Naive thymus-derived CD4-positive, alpha-beta T cell (primary cell): ENCODE measurements at regions of chr4 and their contacts with region 1.

Region 1: GRCh38 chr4:185203486-185204237 is at the start of gene CFAP97:
- DNase-seq: peak; percentile 78 to 90 (median 85)
- ATAC-seq: peak; percentile 89
- H3K4me3 ChIP-seq: peak within 1 kb of the TSS; percentile 64
- H3K4me3 Mint-ChIP-seq: peak within 1 kb of the TSS; percentile 87 to 99 (median 96)
- H3K27ac ChIP-seq: peak within 1 kb of the TSS; percentile 75
- H3K27ac Mint-ChIP-seq: peak within 1 kb of the TSS; percentile 95 to 99 (median 98)
- H3K4me1 ChIP-seq: peaks cover 22% of the 10 kb centered on the region in 2 donors
- H3K4me1 Mint-ChIP-seq: peaks cover 28 to 60% (median 53%) of the 10 kb centered on the region in 7 donors
- H3K27me3 ChIP-seq: no peaks in the 10 kb centered on the region
- H3K27me3 Mint-ChIP-seq: peaks cover 0 to 3% (median 0%) of the 10 kb centered on the region in 5 donors
- total RNA-seq, gene CFAP97: 23.6 to 46.5 (median 38.0) TPM

Region 2: DNA sequence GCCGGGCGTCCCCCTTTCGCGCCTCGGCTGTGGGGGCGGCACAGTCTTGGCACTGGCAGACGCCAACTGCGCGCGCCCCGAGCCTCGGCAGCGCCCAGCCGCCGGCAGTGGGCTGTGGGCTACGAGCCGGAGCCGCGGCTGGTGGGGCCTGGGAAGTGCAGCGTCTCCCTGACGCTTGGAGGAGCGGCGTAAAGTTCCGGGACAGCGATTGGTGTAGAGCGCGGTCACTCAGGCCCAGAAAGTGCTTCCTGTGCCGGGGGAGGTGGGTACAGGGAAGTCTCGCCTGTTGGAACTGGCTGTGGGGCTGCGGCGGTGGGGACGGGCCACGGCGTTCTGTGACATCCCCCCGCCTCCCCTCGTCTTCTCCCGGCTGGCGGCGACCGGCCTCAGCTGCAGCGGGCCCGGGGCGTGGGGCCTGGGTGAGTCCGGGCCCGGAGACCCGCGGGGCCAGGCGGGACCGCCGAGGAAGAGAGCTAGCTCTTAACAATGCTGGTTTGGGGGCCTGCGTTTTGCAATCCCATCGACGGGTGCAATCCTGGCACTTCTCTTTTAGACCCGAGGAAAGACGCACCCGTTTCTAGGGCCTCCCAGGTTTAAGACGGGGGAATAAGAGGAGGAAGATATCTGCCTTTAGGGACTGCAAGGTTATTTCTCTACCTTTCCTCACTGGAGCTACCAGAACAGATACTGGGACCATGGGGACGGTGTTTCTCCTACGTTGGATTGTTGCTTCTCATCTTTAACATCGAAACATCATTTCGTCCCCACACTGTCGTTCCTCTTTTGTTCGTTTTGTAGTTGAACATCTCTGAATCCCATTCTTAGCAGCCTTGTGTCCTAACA is 1544.4 kb before region 1 on chr4 and contains the starts of genes RWDD4 and TRAPPC11:
- CTCF ChIA-PET with region 1: no interaction called
- POLR2A ChIA-PET with region 1: no interaction called
- intact Hi-C with region 1: loop called in 1 of 2 experiments (anchors 10 kb)
- DNase-seq: peak; percentile 83 to 97 (median 95)
- ATAC-seq: peak; percentile 99
- H3K4me3 ChIP-seq: peak within 1 kb of the TSS; percentile 87
- H3K4me3 Mint-ChIP-seq: peak within 1 kb of the TSS; percentile 91 to 98 (median 96)
- H3K27ac ChIP-seq: peak within 1 kb of the TSS; percentile 96
- H3K27ac Mint-ChIP-seq: peak within 1 kb of the TSS; percentile 90 to 99 (median 95)
- H3K4me1 ChIP-seq: peaks cover 14 to 19% of the 10 kb centered on the region in 2 donors
- H3K4me1 Mint-ChIP-seq: peaks cover 35 to 48% (median 38%) of the 10 kb centered on the region in 7 donors
- H3K27me3 ChIP-seq: no peaks in the 10 kb centered on the region
- H3K27me3 Mint-ChIP-seq: no peaks in the 10 kb centered on the region
- total RNA-seq, gene RWDD4: 9.3 to 15.8 (median 11.6) TPM
- total RNA-seq, gene TRAPPC11: 26.3 to 48.8 (median 35.6) TPM

Region 3: GRCh38 chr4:185142912-185143595 is 60.6 kb before region 1 on chr4 and contains the start of gene SLC25A4:
- CTCF ChIA-PET with region 1: no interaction called
- POLR2A ChIA-PET with region 1: interaction called, 4 read pairs
- intact Hi-C with region 1: loop called (anchors 1 to 5 kb)
- DNase-seq: peak; percentile 68 to 81 (median 75)
- ATAC-seq: peak; percentile 95
- H3K4me3 ChIP-seq: peak within 1 kb of the TSS; percentile 57
- H3K4me3 Mint-ChIP-seq: peak within 1 kb of the TSS; percentile 84 to 95 (median 90)
- H3K27ac ChIP-seq: peak within 1 kb of the TSS; percentile 52
- H3K27ac Mint-ChIP-seq: peak within 1 kb of the TSS in 7 of 9 donors; percentile 4 to 89 (median 83)
- H3K4me1 ChIP-seq: peaks cover 4 to 13% of the 10 kb centered on the region in 2 donors
- H3K4me1 Mint-ChIP-seq: peaks cover 11 to 15% (median 12%) of the 10 kb centered on the region in 7 donors
- H3K27me3 ChIP-seq: peaks cover 0 to 3% of the 10 kb centered on the region in 2 donors
- H3K27me3 Mint-ChIP-seq: peaks cover 15 to 69% (median 26%) of the 10 kb centered on the region in 5 donors
- total RNA-seq, gene SLC25A4: 0.60 to 7.2 (median 4.9) TPM

Region 4: DNA sequence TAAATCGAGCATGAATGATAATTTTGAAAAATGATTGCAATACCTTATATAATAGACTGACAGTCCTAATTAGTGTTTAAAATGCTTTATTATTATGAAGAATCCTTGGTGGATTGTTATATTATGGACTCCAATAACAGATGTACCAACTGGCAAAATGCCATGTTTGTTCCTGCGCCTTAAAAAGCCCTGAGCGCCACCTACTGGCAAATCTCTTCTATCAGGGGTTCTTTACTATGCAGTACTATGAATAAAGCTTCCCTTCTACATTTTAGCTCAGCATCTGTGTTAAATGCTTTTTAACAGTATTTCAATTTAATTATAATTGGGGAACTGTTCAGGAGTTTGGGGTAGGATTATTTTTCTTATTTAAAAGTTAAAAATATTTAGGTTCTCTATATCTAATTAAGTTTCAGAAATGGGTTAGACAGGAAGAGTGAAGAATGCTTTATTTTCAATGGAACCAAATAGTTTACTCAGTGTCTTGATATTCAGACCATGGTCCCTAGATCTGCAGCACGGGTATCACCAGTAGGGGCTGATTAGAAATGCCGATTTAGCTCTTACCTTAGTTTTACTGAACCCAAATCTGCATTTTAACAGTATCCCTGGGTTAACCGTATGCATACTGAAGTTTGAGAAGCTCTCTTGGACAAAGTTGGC is 19.9 kb before region 1 on chr4:
- CTCF ChIA-PET with region 1: interaction called, 16 read pairs
- POLR2A ChIA-PET with region 1: interaction called, 6 read pairs
- intact Hi-C with region 1: loop called in 1 of 2 experiments (anchors 1 kb)
- DNase-seq: peak; percentile 42 to 78 (median 73)
- ATAC-seq: peak; percentile 84
- H3K4me3 ChIP-seq: no peak overlapping the region
- H3K4me3 Mint-ChIP-seq: no peak overlapping the region
- H3K27ac ChIP-seq: no peak overlapping the region
- H3K27ac Mint-ChIP-seq: no peak overlapping the region
- H3K4me1 ChIP-seq: no peaks in the 10 kb centered on the region
- H3K4me1 Mint-ChIP-seq: peaks cover 16 to 63% (median 39%) of the 10 kb centered on the region in 7 donors
- H3K27me3 ChIP-seq: no peaks in the 10 kb centered on the region
- H3K27me3 Mint-ChIP-seq: no peaks in the 10 kb centered on the region

Region 5: DNA sequence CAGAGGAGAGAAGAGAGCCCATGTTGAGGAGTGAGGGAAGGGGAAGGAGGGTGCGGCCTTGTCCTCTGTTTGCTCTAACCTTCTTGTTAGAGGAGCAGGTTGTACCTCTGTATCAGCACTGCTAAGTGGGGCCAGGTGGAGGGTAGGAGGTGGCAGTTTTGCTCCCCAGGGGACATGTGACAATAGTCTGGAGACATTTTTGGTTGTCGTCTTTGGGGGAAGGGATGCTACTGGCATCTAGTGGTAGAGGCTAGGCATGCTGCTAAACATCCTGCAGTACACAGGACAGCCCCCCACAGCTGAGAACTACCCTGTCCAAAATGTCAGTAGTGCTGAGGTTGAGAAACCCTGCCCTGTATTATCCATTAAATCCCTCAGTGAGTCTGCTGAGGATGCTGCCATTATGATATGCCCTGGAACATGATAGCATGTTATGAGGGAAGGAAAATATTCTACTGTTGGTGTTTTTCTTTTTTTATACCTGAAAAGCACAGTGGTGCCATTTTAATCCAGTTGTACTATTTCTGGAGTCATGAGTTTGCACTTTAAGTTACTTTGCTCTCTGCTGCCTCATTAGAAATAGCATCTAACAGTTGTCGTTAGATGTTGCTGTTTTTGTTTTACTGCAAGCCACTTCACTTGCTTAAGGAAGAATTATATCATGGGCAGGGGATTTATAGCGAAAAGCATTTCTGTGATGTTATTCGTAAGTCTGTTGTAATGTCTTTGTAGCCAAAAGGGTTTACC is 101.5 kb after region 1 on chr4:
- CTCF ChIA-PET with region 1: no interaction called
- POLR2A ChIA-PET with region 1: no interaction called
- intact Hi-C with region 1: loop called in 1 of 2 experiments (anchors 5 kb)
- DNase-seq: peak in 7 of 9 donors; percentile 0 to 44 (median 36)
- ATAC-seq: peak; percentile 59
- H3K4me3 ChIP-seq: no peak overlapping the region
- H3K4me3 Mint-ChIP-seq: no peak overlapping the region
- H3K27ac ChIP-seq: no peak overlapping the region
- H3K27ac Mint-ChIP-seq: peak overlapping the region in 2 of 9 donors; percentile 25 to 75
- H3K4me1 ChIP-seq: no peaks in the 10 kb centered on the region
- H3K4me1 Mint-ChIP-seq: peaks cover 0 to 15% (median 0%) of the 10 kb centered on the region in 7 donors
- H3K27me3 ChIP-seq: no peaks in the 10 kb centered on the region
- H3K27me3 Mint-ChIP-seq: no peaks in the 10 kb centered on the region

Region 6: DNA sequence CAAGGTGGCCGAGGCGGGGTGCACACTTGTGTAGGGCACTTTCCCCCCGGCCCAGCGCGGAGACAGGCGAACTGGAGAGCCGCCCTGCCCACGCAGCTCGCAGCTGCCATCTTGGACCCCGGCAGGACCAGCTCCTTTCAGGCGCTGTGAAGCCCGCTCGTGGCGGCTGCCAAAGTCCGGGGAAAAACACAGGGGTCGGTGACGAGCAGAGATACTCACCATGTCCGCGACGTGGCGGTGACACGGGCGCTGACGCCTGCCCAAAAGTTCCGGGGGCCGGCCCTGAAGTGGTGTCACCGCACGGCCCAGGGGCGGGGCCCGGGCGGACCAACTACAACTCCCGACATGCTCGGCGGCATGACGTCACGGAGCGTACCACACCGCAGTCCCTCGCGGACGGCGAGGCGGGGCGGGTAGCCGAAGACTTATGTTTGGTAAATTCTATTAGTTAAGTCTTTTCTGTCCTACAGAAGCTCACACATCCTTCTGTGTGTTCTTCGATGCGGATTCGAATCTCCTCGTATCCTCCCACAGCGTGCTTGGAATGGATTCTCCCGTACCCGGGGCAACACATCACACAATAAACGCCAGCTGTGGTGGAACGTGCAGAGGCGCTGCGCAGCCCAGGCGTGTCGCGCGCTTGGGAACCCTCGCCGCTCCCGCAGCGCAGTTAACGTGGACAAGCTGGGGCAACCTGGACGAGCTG is 222.1 kb after region 1 on chr4 and contains the start of gene UFSP2:
- CTCF ChIA-PET with region 1: no interaction called
- POLR2A ChIA-PET with region 1: no interaction called
- intact Hi-C with region 1: loop called (anchors 1 kb)
- DNase-seq: peak; percentile 88 to 96 (median 92)
- ATAC-seq: peak; percentile 93
- H3K4me3 ChIP-seq: peak within 1 kb of the TSS; percentile 98
- H3K4me3 Mint-ChIP-seq: peak within 1 kb of the TSS; percentile 78 to 97 (median 90)
- H3K27ac ChIP-seq: peak within 1 kb of the TSS; percentile 95
- H3K27ac Mint-ChIP-seq: peak within 1 kb of the TSS; percentile 89 to 100 (median 99)
- H3K4me1 ChIP-seq: peaks cover 16 to 18% of the 10 kb centered on the region in 2 donors
- H3K4me1 Mint-ChIP-seq: peaks cover 25 to 43% (median 38%) of the 10 kb centered on the region in 7 donors
- H3K27me3 ChIP-seq: no peaks in the 10 kb centered on the region
- H3K27me3 Mint-ChIP-seq: peaks cover 0 to 12% (median 7%) of the 10 kb centered on the region in 5 donors
- total RNA-seq, gene UFSP2: 13.9 to 34.5 (median 21.0) TPM

Region 7: DNA sequence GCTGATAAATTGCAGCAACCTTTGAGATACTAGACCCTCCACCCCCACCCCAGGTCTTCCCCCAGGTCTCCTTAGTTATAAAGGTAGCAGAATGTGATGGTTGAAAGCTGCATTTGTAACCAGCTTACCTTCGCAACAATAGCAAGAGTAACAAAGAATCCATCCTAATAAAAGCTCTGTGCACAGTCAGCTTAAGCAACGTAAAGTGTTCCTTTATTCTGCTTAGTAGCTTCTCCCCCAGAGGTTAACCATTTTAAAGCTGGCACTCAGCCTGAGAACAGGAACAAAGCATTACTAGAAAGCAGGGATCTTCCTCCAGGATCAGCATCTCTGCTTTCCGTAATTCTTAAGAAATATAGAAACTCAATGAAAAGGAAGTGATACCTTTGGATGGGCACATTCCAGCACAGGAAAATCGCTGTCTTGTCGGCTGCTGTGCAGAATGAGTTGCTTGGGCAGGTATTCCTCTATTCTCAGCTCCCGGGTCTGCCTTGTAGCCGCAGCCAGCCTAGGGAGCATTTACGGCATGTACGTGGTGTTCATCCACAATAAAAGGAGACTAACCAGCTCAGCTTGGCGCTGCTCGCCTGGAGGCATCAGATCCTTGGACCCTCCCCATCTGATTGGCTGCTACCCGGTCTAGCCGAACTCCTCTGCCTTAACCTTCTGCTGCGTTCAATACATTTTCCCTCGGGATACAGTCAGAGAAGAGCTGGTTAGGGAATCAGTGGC is 752.3 kb after region 1 on chr4:
- CTCF ChIA-PET with region 1: no interaction called
- POLR2A ChIA-PET with region 1: no interaction called
- intact Hi-C with region 1: no loop called
- DNase-seq: no peak
- ATAC-seq: no peak
- H3K4me3 ChIP-seq: no peak overlapping the region
- H3K4me3 Mint-ChIP-seq: no peak overlapping the region
- H3K27ac ChIP-seq: no peak overlapping the region
- H3K27ac Mint-ChIP-seq: no peak overlapping the region
- H3K4me1 ChIP-seq: no peaks in the 10 kb centered on the region
- H3K4me1 Mint-ChIP-seq: no peaks in the 10 kb centered on the region
- H3K27me3 ChIP-seq: no peaks in the 10 kb centered on the region
- H3K27me3 Mint-ChIP-seq: peaks cover 3 to 20% (median 14%) of the 10 kb centered on the region in 5 donors

Region 8: GRCh38 chr4:186191200-186192065 is 987.8 kb after region 1 on chr4 and contains the start of gene CYP4V2:
- CTCF ChIA-PET with region 1: no interaction called
- POLR2A ChIA-PET with region 1: no interaction called
- intact Hi-C with region 1: loop called (anchors 2 to 5 kb)
- DNase-seq: peak; percentile 68 to 94 (median 90)
- ATAC-seq: peak; percentile 90
- H3K4me3 ChIP-seq: peak within 1 kb of the TSS; percentile 91
- H3K4me3 Mint-ChIP-seq: peak within 1 kb of the TSS; percentile 89 to 97 (median 94)
- H3K27ac ChIP-seq: peak within 1 kb of the TSS; percentile 95
- H3K27ac Mint-ChIP-seq: peak within 1 kb of the TSS; percentile 94 to 99 (median 98)
- H3K4me1 ChIP-seq: peaks cover 12 to 19% of the 10 kb centered on the region in 2 donors
- H3K4me1 Mint-ChIP-seq: peaks cover 34 to 62% (median 56%) of the 10 kb centered on the region in 7 donors
- H3K27me3 ChIP-seq: no peaks in the 10 kb centered on the region
- H3K27me3 Mint-ChIP-seq: no peaks in the 10 kb centered on the region
- total RNA-seq, gene CYP4V2: 19.7 to 41.4 (median 26.0) TPM